ENCODE measurements at regions of chr17 and their contacts with region 1.

Region 1: DNA sequence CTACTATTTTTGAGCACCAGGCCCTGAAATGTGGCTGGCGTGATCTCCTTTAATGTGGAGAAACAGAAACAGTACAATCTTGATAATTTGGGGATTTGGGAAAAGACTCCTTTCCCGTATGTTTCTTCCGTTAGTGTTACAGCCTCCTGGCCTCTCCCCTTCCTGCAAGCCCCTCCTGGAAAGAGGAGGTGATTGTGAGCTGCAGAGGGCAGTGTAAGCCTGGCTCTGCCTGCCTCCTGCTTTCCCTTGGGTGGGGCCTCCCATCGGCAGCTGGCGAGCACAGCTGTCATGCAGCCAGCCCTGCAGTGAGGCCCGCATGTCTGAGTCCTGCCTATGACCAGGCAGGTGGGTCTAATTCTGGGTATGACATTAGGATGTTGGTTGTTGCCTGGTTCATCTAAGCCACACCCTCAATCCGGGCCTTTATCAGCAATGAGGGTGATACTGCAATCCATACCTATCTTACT is 48.7 kb upstream of the WSB1 start:
- DNase-seq: peak in 1 of 2 donors; percentile 97
- H3K4me3 ChIP-seq: peak overlapping the region in 1 of 2 donors; percentile 23
- H3K27ac ChIP-seq: peak overlapping the region; percentile 92
- H3K4me1 ChIP-seq: peaks cover 64% of the 10 kb centered on the region
- H3K27me3 ChIP-seq: no peaks in the 10 kb centered on the region
- CTCF ChIP-seq: peak; percentile 12 to 61 (median 49)
- POLR2A ChIP-seq: no peak

Region 2: GRCh38 chr17:27293898-27294688 is 48.8 kb after region 1 on chr17 and contains the start of gene WSB1:
- intact Hi-C with region 1: loop called (anchors 5 kb)
- DNase-seq: peak in 1 of 2 donors; percentile 96
- H3K4me3 ChIP-seq: peak within 1 kb of the TSS; percentile 91 to 98
- H3K27ac ChIP-seq: peak within 1 kb of the TSS; percentile 100
- H3K4me1 ChIP-seq: peaks cover 33% of the 10 kb centered on the region
- H3K27me3 ChIP-seq: no peaks in the 10 kb centered on the region
- CTCF ChIP-seq: no peak
- POLR2A ChIP-seq: peak; percentile 77 to 99
- total RNA-seq, gene WSB1: 158 TPM

Region 3: DNA sequence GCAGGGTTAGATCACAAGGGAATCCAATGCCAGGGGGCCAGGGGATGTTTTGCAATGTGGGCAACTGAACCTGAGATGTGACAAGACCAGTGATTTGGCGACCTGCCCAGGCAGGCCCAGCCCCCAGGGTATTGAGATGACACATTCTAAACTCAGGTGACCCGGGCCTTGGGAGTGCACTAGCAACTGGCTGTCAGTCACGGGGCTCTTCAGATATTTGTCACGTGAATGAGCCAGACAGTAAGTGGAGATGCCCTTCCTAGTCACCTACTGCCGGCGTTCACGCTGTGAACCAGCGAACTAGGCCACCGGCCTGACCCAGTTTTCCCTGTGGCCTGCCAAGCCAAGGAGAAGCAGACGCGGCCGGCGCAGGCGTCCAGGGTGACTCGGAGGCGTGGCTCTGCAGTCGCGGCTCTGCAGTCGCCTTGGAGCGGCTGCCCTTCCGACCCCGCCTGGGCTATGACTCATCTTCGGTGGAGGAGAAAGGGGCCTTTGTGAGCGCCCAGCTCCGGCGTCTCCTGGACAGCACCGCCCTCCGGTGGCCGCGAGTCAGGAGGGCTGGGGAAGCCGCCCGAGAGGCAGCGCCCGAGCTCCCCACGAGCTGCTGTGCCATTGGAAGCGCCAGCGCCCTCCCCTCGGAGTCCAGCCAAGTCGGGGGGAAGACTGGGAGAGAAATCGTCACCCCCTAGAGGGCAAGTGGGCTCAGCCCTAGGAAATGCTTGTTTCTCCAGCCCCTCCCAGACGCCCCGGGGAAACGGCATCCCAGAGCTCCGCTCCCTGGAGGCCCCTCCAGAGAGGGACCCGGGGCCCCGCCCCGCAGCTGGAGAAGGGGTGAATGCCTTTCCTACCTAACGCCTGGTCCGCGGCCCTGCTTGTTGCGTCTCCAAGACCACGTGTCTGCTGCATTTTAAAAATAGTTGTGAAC is 87.5 kb after region 1 on chr17:
- intact Hi-C with region 1: loop called (anchors 2 kb)
- DNase-seq: peak in 1 of 2 donors; percentile 99
- H3K4me3 ChIP-seq: peak overlapping the region; percentile 50 to 51
- H3K27ac ChIP-seq: peak overlapping the region; percentile 94
- H3K4me1 ChIP-seq: peaks cover 21% of the 10 kb centered on the region
- H3K27me3 ChIP-seq: no peaks in the 10 kb centered on the region
- CTCF ChIP-seq: peak; percentile 48 to 92 (median 81)
- POLR2A ChIP-seq: no peak